Naive thymus-derived CD4-positive, alpha-beta T cell (primary cell): ENCODE measurements at regions of chr2 and their contacts with region 1.

Region 1: DNA sequence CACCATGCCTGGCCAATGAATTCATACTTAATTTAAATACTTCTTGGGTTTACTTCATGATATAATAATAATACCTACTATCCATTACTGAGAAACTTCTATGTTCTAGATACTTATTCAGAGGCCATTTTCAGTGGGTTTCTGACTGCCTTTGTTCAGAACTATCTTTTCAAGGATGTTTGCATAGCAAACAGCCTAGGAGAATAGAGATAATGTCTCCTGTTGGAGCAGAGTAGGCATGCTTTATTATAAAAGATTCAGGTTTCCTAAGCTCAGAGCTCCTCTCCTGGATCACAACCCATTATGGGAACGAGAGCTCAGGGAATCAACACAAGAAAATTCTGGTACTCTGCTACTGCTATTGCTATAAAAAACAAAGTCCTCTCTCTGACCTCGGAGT is 11.1 kb downstream of the FASTKD1 start:
- DNase-seq: peak in 3 of 9 donors; percentile 4 to 26 (median 12)
- ATAC-seq: no peak
- H3K4me3 ChIP-seq: no peak overlapping the region
- H3K4me3 Mint-ChIP-seq: peak overlapping the region in 2 of 10 donors; percentile 6 to 44
- H3K27ac ChIP-seq: no peak overlapping the region
- H3K27ac Mint-ChIP-seq: peak overlapping the region in 7 of 9 donors; percentile 5 to 90 (median 73)
- H3K4me1 ChIP-seq: no peaks in the 10 kb centered on the region
- H3K4me1 Mint-ChIP-seq: peaks cover 0 to under 1% (median 0%) of the 10 kb centered on the region in 7 donors
- H3K27me3 ChIP-seq: no peaks in the 10 kb centered on the region
- H3K27me3 Mint-ChIP-seq: no peaks in the 10 kb centered on the region

Region 2: GRCh38 chr2:168974428-168974827 is 588.1 kb before region 1 on chr2:
- CTCF ChIA-PET with region 1: no interaction called
- POLR2A ChIA-PET with region 1: no interaction called
- intact Hi-C with region 1: loop called in 1 of 2 experiments (anchors 5 kb)
- DNase-seq: no peak
- ATAC-seq: no peak
- H3K4me3 ChIP-seq: no peak overlapping the region
- H3K4me3 Mint-ChIP-seq: no peak overlapping the region
- H3K27ac ChIP-seq: no peak overlapping the region
- H3K27ac Mint-ChIP-seq: no peak overlapping the region
- H3K4me1 ChIP-seq: no peaks in the 10 kb centered on the region
- H3K4me1 Mint-ChIP-seq: peaks cover 0 to 4% (median 0%) of the 10 kb centered on the region in 7 donors
- H3K27me3 ChIP-seq: no peaks in the 10 kb centered on the region
- H3K27me3 Mint-ChIP-seq: peaks cover 0 to 1% (median 0%) of the 10 kb centered on the region in 5 donors